Sigmoid colon (tissue), 7 donors: ENCODE measurements at regions of chr3 and their contacts with region 1.

Region 1: GRCh38 chr3:158570999-158571974 is at the start of gene MLF1:
- DNase-seq: peak; percentile 99
- H3K4me3 ChIP-seq: peak within 1 kb of the TSS; percentile 61 to 73 (median 65)
- H3K27ac ChIP-seq: peak within 1 kb of the TSS; percentile 77 to 82 (median 80)
- H3K4me1 ChIP-seq: peaks cover 0 to 20% (median 11%) of the 10 kb centered on the region in 4 donors
- H3K27me3 ChIP-seq: no peaks in the 10 kb centered on the region
- CTCF ChIP-seq: no peak
- EP300 ChIP-seq: no peak
- POLR2A ChIP-seq: peak; percentile 61 to 72
- total RNA-seq, gene MLF1: 5.0 to 11.8 (median 10.1) TPM

Region 2: DNA sequence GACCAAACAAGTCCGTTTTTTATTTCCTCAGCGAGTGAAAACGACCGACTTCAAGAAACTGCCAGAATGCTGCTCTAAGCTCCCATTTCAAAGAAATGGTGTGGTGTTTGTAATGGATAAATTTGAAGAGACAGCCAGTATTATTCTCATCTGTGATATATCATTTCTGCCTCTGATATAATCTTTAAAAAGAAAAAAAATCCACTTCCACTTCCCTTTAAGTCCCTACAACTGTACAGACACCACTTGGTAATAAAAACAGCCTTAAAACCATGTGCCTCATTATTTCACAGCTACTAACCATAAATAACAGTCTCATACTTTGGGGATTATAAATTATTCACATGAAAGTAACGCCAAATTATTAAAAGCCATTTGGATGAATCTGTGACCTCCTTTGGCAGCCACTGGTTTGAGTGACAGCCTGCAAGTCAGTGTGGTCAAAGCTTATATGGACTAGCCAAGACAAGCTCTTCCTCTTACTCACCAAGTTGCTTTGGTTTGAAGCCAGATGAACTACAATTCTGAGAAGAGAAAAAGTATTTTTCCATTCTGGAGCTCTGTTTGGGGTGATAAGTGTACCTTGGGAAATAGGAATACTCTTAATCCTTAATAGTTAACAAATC is 633.0 kb before region 1 on chr3:
- intact Hi-C with region 1: no loop called
- DNase-seq: no peak
- H3K4me3 ChIP-seq: no peak overlapping the region
- H3K27ac ChIP-seq: no peak overlapping the region
- H3K4me1 ChIP-seq: no peaks in the 10 kb centered on the region
- H3K27me3 ChIP-seq: no peaks in the 10 kb centered on the region
- CTCF ChIP-seq: no peak
- EP300 ChIP-seq: no peak
- POLR2A ChIP-seq: no peak

Region 3: DNA sequence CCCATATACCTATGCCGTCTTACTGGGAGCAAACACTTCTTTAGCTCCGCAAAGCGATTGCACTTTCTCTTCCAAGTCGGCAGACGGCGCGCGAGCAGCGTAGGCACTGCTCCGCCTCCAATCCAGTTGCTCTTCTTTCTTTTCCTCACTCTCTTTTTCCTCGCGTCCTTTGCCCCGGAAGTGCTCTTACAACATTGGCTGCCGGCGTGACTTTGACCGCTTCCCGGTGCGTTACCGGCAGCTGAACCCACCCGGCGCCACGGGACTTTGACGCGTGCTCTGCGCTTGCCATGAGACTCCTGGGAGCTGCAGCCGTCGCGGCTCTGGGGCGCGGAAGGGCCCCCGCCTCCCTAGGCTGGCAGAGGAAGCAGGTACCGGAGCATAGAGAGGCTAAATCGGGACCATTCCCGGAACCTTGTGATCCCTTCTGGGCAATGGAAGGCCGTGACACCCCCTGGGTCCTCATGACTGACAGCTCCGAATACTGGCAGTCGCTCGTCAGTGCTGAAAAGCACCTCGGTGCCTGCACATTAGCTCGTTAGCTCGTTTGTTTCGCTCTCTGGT is 73.1 kb after region 1 on chr3 and contains the start of gene GFM1:
- intact Hi-C with region 1: loop called (anchors 10 kb)
- DNase-seq: peak; percentile 96
- H3K4me3 ChIP-seq: peak within 1 kb of the TSS; percentile 83 to 90 (median 86)
- H3K27ac ChIP-seq: peak within 1 kb of the TSS; percentile 85 to 90 (median 86)
- H3K4me1 ChIP-seq: peaks cover 0 to 18% (median 14%) of the 10 kb centered on the region in 4 donors
- H3K27me3 ChIP-seq: no peaks in the 10 kb centered on the region
- CTCF ChIP-seq: peak; percentile 59 to 76 (median 62)
- EP300 ChIP-seq: no peak
- POLR2A ChIP-seq: peak; percentile 10 to 55
- total RNA-seq, gene GFM1: 32.7 to 56.2 (median 42.7) TPM

Region 4: DNA sequence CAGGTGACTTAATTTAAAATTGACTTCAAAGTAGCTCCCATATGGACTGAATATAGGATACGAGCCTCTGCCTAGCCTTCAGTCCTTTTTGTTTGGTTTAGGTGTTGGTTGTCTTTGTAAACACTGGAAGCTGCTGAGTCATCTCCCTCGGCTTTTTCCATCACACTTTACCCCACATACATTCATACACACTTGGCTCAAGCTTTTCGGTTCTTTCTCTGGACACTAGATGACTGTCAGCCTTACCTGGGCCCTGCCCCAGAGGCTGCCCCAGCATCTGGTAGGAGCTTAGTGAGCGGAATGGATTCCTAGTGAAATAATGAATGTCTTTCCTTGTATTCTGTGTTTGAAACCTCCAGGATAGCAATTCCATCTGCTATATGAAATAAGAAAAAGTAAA is 1215.9 kb after region 1 on chr3:
- intact Hi-C with region 1: no loop called
- DNase-seq: no peak
- H3K4me3 ChIP-seq: no peak overlapping the region
- H3K27ac ChIP-seq: peak overlapping the region; percentile 82 to 90 (median 86)
- H3K4me1 ChIP-seq: peaks cover 0 to 93% (median 81%) of the 10 kb centered on the region in 4 donors
- H3K27me3 ChIP-seq: no peaks in the 10 kb centered on the region
- CTCF ChIP-seq: no peak
- EP300 ChIP-seq: peak in 1 of 4 donors; percentile 30
- POLR2A ChIP-seq: no peak